PC-3 (cell line): ENCODE measurements at regions of chr10 and their contacts with region 1.

Region 1: DNA sequence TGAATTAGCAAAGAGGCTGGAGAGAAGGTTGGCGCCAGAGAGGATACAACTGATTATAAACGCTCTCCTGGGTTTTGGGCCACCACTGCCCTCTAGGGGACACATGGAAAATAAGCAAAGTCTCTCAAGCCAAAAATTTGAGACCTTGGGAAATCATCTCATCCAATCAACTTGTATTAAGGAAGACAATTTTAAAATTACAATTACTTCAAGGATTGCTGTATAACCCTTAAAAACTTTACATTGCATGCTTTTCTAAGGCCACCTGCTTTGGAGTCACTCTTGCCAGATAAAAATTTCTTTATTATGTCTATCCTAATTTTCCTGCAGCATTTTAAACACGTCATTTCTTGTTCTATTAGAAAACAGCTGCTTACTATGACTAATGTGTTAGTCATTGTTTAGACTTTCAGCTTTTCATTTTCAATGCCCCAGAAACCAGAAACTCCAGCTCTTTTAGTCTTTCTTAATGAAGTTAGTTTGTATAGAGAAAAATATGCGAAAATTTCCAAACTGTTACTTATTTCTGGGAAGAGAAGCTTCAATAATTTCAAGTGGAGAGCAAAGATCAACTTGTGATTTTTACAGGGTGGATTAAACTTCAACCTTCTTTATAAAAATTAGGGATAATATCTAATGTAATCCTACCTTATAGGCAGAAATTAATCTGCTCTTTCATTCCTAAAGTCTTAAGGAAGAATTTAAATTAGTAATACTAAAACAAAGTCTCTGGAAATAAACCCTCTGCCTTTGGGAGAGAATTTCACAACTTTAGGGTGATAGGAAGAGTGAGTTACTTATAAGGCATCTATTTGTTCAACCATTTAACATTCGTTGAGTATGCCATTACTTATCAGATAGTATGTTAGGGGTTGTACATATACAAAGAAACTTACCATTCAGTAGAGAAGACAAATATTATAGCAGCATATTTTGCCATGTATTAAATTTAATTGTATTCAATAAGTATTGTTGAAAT is 20.6 kb upstream of the RHOBTB1 start:
- DNase-seq: peak; percentile 98
- ATAC-seq: peak; percentile 86
- H3K4me3 ChIP-seq: peak overlapping the region; percentile 24
- H3K27ac ChIP-seq: peak overlapping the region; percentile 44
- H3K4me1 ChIP-seq: peaks cover 37% of the 10 kb centered on the region
- H3K27me3 ChIP-seq: no peaks in the 10 kb centered on the region
- CTCF ChIP-seq: peak; percentile 100

Region 2: DNA sequence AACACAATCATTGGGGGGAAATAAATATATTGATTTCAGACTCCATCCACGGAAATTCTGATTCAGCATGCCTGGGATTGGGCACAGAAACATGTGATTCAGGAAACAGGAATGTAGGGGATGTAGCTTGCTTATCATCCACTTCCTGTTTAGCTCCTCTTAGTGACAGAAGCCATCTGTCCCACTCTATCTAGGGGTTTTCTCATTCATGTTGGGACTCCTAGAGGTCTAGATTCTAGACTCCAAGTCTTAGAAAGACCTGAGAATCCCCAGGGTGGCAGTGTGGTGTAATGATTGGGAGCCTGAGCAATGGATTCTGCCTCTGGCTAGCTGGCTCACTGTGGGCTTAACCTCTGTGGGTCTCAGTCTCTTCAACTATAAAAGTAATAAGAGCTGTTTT is 118.4 kb before region 1 on chr10:
- CTCF ChIA-PET with region 1: interaction called, 13 read pairs
- POLR2A ChIA-PET with region 1: no interaction called
- intact Hi-C with region 1: loop called (anchors 1 kb)
- DNase-seq: peak; percentile 79
- ATAC-seq: peak; percentile 97
- H3K4me3 ChIP-seq: no peak overlapping the region
- H3K27ac ChIP-seq: no peak overlapping the region
- H3K4me1 ChIP-seq: peaks cover 9% of the 10 kb centered on the region
- H3K27me3 ChIP-seq: no peaks in the 10 kb centered on the region
- CTCF ChIP-seq: peak; percentile 75

Region 3: DNA sequence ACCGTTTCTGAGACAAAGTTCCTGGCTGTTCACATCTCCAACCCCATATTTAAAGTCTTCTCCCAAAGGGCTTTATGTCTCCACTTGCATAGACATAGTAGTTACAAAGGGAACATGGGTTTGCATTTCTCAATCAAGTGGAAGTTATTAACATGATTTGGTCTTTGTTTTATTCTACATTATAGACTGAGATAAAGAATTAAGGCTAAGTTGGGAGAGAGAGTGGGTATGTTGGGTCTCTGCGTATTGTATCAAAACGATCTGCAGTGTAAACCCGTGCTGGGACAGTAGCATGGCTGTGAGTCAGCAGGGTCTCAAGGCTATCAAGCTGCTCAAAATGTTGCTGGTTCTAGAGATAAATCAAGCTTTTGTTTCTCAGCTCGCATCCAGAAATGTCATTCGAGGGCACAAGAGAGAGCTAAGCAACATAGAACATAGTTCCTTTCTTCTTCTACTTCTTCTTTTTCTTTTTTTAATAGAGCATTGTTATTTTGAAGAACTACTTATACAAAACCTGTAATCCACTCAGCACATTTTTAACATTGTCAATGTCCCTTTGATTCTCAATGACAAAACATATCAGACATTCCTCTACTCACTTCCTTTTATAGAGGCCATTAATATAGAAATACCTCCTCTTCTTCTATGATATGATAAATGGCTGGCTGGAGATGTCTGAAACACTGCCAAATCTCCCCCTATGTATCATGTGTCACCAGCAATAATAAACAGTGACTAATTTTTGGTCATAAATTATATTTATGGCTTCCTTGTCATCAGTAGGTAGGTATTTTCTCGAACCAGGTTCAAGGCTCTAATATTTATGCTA is 14.0 kb after region 1 on chr10:
- CTCF ChIA-PET with region 1: no interaction called
- POLR2A ChIA-PET with region 1: no interaction called
- intact Hi-C with region 1: loop called (anchors 1 kb)
- DNase-seq: peak; percentile 99
- ATAC-seq: peak; percentile 64
- H3K4me3 ChIP-seq: no peak overlapping the region
- H3K27ac ChIP-seq: peak overlapping the region; percentile 32
- H3K4me1 ChIP-seq: peaks cover 67% of the 10 kb centered on the region
- H3K27me3 ChIP-seq: no peaks in the 10 kb centered on the region
- CTCF ChIP-seq: no peak

Region 4: DNA sequence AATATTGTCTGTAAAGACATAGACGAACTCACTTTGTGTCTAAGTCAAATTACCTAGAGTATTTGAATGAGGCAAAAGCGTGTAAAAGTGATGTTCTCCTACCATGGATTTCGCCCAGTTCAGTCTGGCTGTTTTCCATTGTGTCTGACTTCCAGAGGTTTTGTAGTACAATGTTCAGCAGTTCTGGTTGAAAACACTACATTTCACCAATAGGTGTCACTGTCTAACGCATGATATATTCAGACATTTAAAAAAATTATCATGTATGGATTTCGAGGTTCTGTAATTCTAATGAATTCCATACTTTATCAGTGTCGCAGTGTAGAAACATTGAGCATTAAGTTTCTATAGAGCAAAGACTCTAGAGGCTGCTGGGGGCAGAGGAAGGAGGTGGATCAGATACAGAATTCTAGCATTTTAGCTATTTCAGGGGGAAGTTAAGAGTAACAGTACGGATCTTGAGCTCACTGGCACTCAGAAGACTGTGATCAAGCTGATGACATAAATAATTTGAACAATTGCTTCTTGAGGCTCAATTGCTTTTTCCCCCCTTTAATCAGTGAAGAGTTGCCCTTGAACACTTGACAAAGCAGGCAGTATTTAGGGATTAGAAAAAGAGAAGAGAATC is 176.3 kb after region 1 on chr10:
- CTCF ChIA-PET with region 1: interaction called, 4 read pairs
- POLR2A ChIA-PET with region 1: no interaction called
- intact Hi-C with region 1: loop called (anchors 1 kb)
- DNase-seq: peak; percentile 96
- ATAC-seq: peak; percentile 83
- H3K4me3 ChIP-seq: no peak overlapping the region
- H3K27ac ChIP-seq: no peak overlapping the region
- H3K4me1 ChIP-seq: peaks cover 11% of the 10 kb centered on the region
- H3K27me3 ChIP-seq: no peaks in the 10 kb centered on the region
- CTCF ChIP-seq: peak; percentile 99

Region 5: DNA sequence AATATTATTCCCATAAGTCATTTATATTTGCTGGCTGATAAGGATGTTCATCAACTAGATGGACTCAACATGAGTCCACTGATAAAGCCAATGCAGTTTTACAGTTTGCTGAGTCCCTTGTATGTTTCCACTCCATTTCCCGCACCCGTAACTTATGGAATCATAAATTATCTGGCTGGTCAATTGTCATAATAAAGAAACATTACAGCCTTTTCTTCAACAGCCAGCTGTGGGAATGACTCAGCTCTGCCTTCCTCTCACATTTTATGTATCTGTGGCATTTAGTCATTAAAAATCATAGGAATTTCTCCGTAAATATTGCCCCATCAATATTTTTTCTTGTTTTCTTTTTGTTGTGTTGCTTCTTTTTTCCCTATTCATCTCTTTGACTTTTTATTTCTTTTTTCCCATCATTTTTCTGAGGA is 510.9 kb after region 1 on chr10:
- CTCF ChIA-PET with region 1: no interaction called
- POLR2A ChIA-PET with region 1: no interaction called
- intact Hi-C with region 1: no loop called
- DNase-seq: peak; percentile 98
- ATAC-seq: peak; percentile 41
- H3K4me3 ChIP-seq: no peak overlapping the region
- H3K27ac ChIP-seq: no peak overlapping the region
- H3K4me1 ChIP-seq: peaks cover 36% of the 10 kb centered on the region
- H3K27me3 ChIP-seq: no peaks in the 10 kb centered on the region
- CTCF ChIP-seq: no peak